Sigmoid colon (tissue), 7 donors: ENCODE measurements at regions of chr2 and their contacts with region 1.

Region 1: DNA sequence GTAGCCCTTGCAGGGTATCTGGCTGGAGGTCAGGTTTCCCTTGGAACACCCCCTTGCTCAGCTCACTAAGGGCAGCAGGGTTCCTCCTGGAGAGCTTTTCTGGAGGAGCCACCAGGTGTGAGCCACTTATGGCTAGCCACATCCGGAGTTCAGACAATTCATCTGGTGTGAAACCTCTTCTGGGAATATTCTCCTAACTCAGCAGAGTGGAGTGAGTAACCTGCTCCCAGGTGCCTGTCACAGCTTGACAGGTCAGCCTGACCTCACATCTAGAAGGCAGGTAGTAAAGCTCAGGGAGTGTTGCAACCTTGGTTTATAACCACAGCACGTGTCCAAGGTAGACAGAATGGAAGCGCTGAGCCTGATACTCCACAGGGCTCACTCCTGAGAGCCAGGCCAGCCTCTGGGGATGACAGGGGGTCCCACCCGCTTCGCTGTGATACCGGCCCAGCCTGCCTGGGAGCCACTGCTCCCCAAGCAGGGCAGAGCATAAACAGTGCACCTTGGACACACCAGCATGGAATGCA is 62.6 kb upstream of the TGFA start:
- DNase-seq: no peak
- H3K4me3 ChIP-seq: no peak overlapping the region
- H3K27ac ChIP-seq: no peak overlapping the region
- H3K4me1 ChIP-seq: no peaks in the 10 kb centered on the region
- H3K27me3 ChIP-seq: no peaks in the 10 kb centered on the region
- CTCF ChIP-seq: no peak
- EP300 ChIP-seq: no peak
- POLR2A ChIP-seq: no peak

Region 2: GRCh38 chr2:70301344-70302194 is 314.7 kb before region 1 on chr2 and contains the start of gene FAM136A:
- intact Hi-C with region 1: loop called (anchors 1 kb)
- DNase-seq: peak; percentile 91
- H3K4me3 ChIP-seq: peak within 1 kb of the TSS; percentile 68 to 98 (median 90)
- H3K27ac ChIP-seq: peak within 1 kb of the TSS; percentile 81 to 90 (median 83)
- H3K4me1 ChIP-seq: peaks cover 0 to 22% (median 14%) of the 10 kb centered on the region in 4 donors
- H3K27me3 ChIP-seq: no peaks in the 10 kb centered on the region
- CTCF ChIP-seq: peak; percentile 82 to 99 (median 94)
- EP300 ChIP-seq: no peak
- POLR2A ChIP-seq: no peak
- total RNA-seq, gene FAM136A: 20.0 to 25.3 (median 24.1) TPM

Region 3: DNA sequence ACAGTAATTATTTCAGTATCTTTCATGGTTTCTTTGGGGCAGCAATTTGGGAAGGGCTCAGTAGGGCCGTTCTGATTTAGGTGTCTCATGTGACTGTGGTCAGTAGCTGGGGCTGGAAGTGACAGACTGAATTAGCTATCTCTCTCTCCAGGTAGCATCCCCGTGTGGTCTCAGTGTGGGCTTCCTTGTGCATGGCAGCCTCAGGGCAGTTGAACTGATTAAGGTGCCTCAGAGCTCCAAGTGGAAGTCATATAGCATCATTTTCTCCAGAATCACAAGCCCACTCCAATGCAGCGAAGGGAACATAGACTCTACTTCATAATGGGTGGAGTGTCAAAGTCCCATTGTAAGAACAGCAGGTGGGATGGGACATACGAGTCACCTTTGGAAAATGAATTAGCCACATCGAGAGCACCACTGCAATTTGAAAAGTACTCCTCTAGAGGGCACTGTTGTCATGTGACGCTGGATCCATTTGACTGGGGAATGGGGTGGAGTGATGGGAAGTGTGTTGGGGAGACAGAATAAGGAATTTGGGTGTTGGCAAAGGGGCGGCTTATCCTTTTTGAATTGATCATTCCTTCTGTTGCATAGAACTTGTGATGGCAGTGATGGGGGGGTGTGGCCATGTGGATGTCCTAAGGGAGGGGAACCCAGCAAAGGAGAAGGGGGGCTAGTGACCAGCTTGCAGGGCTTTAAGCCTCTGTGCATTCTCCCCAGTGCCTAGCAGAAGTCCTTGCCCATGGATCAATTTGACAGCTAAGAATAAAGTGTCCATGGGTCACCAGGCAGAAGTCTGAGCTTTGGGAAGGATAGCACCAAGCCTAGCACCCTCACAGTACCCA is 275.1 kb before region 1 on chr2:
- intact Hi-C with region 1: loop called (anchors 2 kb)
- DNase-seq: no peak
- H3K4me3 ChIP-seq: no peak overlapping the region
- H3K27ac ChIP-seq: no peak overlapping the region
- H3K4me1 ChIP-seq: no peaks in the 10 kb centered on the region
- H3K27me3 ChIP-seq: no peaks in the 10 kb centered on the region
- CTCF ChIP-seq: peak in 3 of 4 experiments; percentile 38 to 67 (median 57)
- EP300 ChIP-seq: no peak
- POLR2A ChIP-seq: no peak

Region 4: DNA sequence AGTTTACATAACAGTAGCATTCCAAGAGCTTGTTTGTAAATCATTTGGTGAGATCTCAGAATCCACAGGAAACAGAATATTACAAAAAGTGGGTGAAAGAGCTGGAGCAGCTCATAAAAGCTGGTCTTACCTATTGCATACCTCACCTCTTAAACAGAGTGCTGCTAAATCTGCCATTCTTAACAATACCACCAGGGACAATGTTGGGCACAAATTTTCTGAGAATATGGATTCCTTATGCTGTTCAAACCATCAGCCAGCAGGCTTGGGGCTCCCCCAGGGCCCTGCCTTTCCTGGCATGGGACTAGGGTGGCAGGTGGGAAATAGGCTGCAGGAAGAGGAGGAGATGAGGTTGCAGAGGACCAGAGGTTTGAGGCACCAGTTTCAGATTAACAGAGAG is 118.2 kb before region 1 on chr2:
- intact Hi-C with region 1: no loop called
- DNase-seq: no peak
- H3K4me3 ChIP-seq: no peak overlapping the region
- H3K27ac ChIP-seq: no peak overlapping the region
- H3K4me1 ChIP-seq: no peaks in the 10 kb centered on the region
- H3K27me3 ChIP-seq: no peaks in the 10 kb centered on the region
- CTCF ChIP-seq: no peak
- EP300 ChIP-seq: no peak
- POLR2A ChIP-seq: no peak

Region 5: GRCh38 chr2:70523996-70524965 is 92.0 kb before region 1 on chr2:
- intact Hi-C with region 1: no loop called
- DNase-seq: no peak
- H3K4me3 ChIP-seq: no peak overlapping the region
- H3K27ac ChIP-seq: no peak overlapping the region
- H3K4me1 ChIP-seq: peaks cover 0 to 12% (median 7%) of the 10 kb centered on the region in 4 donors
- H3K27me3 ChIP-seq: no peaks in the 10 kb centered on the region
- CTCF ChIP-seq: no peak
- EP300 ChIP-seq: no peak
- POLR2A ChIP-seq: no peak

Region 6: DNA sequence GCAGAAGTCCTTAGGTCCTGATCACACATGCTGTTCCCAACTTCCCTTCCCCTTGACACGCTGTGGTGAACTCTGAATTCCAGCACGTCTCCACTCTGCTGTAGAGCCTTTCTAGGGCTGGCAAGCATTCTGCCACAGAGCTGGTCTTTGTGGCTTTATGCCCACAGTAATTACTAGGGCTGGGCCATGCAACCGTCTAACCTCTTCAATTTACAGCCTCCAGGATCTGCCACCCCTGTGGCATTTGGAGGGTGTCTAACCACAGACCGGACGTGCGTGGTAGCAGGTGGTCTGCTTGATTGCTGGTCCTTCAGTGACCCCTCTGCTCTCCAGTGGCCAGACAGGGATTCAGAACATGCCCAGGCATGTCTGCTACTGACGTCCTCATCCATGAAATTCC is 19.5 kb before region 1 on chr2:
- intact Hi-C with region 1: no loop called
- DNase-seq: no peak
- H3K4me3 ChIP-seq: no peak overlapping the region
- H3K27ac ChIP-seq: no peak overlapping the region
- H3K4me1 ChIP-seq: no peaks in the 10 kb centered on the region
- H3K27me3 ChIP-seq: no peaks in the 10 kb centered on the region
- CTCF ChIP-seq: no peak
- EP300 ChIP-seq: no peak
- POLR2A ChIP-seq: no peak

Region 7: GRCh38 chr2:71498261-71498701 is 882.0 kb after region 1 on chr2:
- intact Hi-C with region 1: no loop called
- DNase-seq: peak; percentile 33
- H3K4me3 ChIP-seq: no peak overlapping the region
- H3K27ac ChIP-seq: peak overlapping the region; percentile 16 to 59 (median 45)
- H3K4me1 ChIP-seq: peaks cover 0 to 10% (median 2%) of the 10 kb centered on the region in 4 donors
- H3K27me3 ChIP-seq: no peaks in the 10 kb centered on the region
- CTCF ChIP-seq: no peak
- EP300 ChIP-seq: no peak
- POLR2A ChIP-seq: no peak